ENCODE measurements at regions of chr16 and their contacts with region 1.

Region 1: DNA sequence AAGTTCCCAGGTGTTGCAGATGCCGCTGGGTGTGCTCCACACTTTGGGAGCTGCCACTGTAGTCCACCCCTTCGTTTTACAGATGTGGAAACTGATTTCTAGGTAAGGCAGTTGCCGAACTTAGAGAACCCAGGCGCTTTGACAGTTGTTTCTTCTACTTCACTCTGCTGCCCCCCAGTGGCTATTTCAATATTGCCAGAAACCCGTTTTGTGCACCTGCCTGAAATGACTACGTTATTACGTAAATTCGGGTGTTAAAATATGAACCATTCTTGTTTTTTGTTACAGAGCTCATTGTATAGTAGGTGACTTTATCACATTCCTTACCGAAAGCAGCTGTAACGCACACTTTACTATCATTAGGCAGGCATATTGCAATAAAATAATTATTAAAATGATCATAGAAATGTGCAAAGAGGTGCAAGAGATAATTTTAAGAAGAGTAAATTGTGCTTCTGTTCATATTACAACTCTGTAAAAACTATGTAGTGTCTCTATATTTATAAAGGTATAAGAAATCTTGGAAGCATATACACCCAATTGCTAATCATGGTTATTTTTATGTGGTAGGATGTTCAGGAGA is 44.9 kb downstream of the OTOA start:
- DNase-seq: peak; percentile 95
- H3K4me3 Mint-ChIP-seq: no peak overlapping the region
- H3K27ac Mint-ChIP-seq: no peak overlapping the region
- H3K4me1 Mint-ChIP-seq: no peaks in the 10 kb centered on the region
- H3K27me3 Mint-ChIP-seq: peaks cover 3% of the 10 kb centered on the region

Region 2: GRCh38 chr16:21584817-21585216 is 123.8 kb before region 1 on chr16:
- intact Hi-C with region 1: loop called (anchors 1 kb)
- DNase-seq: no peak
- H3K4me3 Mint-ChIP-seq: no peak overlapping the region
- H3K27ac Mint-ChIP-seq: no peak overlapping the region
- H3K4me1 Mint-ChIP-seq: no peaks in the 10 kb centered on the region
- H3K27me3 Mint-ChIP-seq: peaks cover 6% of the 10 kb centered on the region

Region 3: DNA sequence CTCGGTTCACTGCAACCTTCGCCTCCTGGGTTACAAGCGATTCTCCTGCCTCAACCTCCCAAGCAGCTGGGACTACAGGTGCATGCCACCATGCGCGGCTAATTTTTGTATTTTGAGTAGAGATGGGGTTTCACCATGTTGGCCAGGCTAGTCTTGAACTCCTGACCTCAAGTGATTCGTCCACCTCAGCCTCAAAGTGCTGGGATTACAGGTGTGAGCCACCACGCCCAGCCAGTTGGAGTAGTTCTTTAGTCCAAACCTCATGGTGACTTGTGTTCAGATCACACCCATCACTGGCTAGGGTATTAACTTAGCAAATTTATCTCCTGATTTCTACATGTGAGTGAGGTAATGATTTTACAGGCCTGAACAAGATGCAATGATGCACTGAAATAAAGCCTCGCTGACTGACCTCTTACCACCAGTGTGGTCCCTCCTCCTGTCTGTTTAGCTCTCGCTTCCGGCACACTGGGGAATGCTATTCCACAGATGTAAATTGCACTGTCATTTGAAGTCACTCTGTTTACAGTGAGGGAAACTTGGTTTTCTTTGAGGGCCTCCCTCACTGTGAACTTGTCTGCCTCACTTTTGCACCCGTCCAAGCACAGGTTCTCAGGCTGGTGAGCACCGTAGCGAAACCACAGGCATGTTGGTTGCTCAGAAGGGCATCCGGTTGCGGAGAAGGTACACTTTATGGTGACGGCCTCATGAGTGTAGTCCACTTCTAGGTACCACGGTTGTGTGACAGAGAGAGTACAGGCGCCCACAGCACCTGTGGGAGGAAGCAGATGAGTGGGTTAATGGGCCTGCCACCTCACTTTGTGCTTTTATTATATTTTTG is 61.7 kb before region 1 on chr16:
- intact Hi-C with region 1: no loop called
- DNase-seq: peak; percentile 92
- H3K4me3 Mint-ChIP-seq: peak overlapping the region; percentile 78
- H3K27ac Mint-ChIP-seq: peak overlapping the region; percentile 91
- H3K4me1 Mint-ChIP-seq: peaks cover 39% of the 10 kb centered on the region
- H3K27me3 Mint-ChIP-seq: no peaks in the 10 kb centered on the region

Region 4: GRCh38 chr16:21656795-21657768 is 51.5 kb before region 1 on chr16:
- intact Hi-C with region 1: loop called (anchors 1 kb)
- DNase-seq: peak; percentile 86
- H3K4me3 Mint-ChIP-seq: peak overlapping the region; percentile 26
- H3K27ac Mint-ChIP-seq: no peak overlapping the region
- H3K4me1 Mint-ChIP-seq: peaks cover 39% of the 10 kb centered on the region
- H3K27me3 Mint-ChIP-seq: no peaks in the 10 kb centered on the region